ENCODE measurements at regions of chr5 and their contacts with region 1.

Region 1: DNA sequence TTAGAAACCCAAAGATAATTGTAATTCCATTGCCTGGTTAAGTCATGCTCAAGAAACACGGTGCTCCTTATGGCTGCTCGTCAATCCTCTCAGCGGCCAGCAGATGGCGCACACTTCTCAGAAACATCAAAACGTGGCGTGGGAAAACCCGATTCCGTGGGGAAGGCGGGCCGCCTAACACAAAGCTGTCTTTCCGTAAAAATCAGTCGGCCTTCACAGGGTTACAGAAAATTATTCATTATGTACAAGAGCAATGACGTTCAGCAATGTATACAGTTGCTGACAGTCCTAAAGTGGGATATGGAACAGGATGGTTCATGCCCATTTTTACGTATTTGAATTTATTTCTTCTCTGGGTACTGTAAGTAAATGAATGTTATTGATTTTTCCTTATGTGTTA is 83.5 kb downstream of the PDE4D start:
- DNase-seq: peak; percentile 48
- ATAC-seq: peak; percentile 73
- H3K4me3 Mint-ChIP-seq: peak overlapping the region; percentile 64
- H3K27ac Mint-ChIP-seq: no peak overlapping the region
- H3K4me1 Mint-ChIP-seq: peaks cover 10% of the 10 kb centered on the region
- H3K27me3 Mint-ChIP-seq: peaks cover 4% of the 10 kb centered on the region
- CTCF ChIP-seq: peak; percentile 25

Region 2: DNA sequence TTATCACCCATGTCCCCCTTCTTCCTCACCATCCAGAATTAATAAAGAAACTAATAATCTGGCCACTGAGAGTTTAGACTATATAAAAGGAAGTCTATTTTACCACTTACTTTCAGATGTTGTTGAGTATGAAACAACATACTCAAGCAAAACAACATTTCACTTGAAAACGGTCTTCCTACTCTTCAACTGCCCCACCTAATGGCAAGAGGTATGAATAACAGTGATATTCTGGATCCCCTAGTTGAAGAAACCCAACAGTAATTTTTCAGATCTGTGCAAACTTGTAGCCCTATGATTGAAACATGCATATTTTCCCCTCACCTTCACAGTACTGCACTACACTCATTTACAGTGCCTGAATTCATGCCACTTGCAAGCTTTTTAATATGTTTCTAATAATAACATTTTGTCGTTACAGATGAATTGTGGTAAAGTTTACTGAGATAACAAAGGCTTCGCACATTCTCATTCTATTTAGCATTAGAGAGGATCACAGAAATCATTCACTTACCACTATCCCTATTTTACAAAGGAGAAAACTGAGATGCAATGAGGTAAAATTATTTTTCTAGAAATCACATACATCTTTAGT is 351.4 kb after region 1 on chr5:
- CTCF ChIA-PET with region 1: no interaction called
- POLR2A ChIA-PET with region 1: no interaction called
- intact Hi-C with region 1: loop called (anchors 5 kb)
- DNase-seq: no peak
- ATAC-seq: no peak
- H3K4me3 Mint-ChIP-seq: no peak overlapping the region
- H3K27ac Mint-ChIP-seq: no peak overlapping the region
- H3K4me1 Mint-ChIP-seq: no peaks in the 10 kb centered on the region
- H3K27me3 Mint-ChIP-seq: no peaks in the 10 kb centered on the region
- CTCF ChIP-seq: no peak

Region 3: GRCh38 chr5:60382716-60383115 is 572.7 kb after region 1 on chr5:
- CTCF ChIA-PET with region 1: no interaction called
- POLR2A ChIA-PET with region 1: no interaction called
- intact Hi-C with region 1: loop called (anchors 1 kb)
- DNase-seq: no peak
- ATAC-seq: no peak
- H3K4me3 Mint-ChIP-seq: no peak overlapping the region
- H3K27ac Mint-ChIP-seq: no peak overlapping the region
- H3K4me1 Mint-ChIP-seq: peaks cover 6% of the 10 kb centered on the region
- H3K27me3 Mint-ChIP-seq: no peaks in the 10 kb centered on the region
- CTCF ChIP-seq: no peak

Region 4: GRCh38 chr5:60586307-60586901 is 776.4 kb after region 1 on chr5:
- CTCF ChIA-PET with region 1: interaction called, 22 read pairs
- POLR2A ChIA-PET with region 1: no interaction called
- intact Hi-C with region 1: loop called (anchors 1 kb)
- DNase-seq: no peak
- ATAC-seq: no peak
- H3K4me3 Mint-ChIP-seq: no peak overlapping the region
- H3K27ac Mint-ChIP-seq: no peak overlapping the region
- H3K4me1 Mint-ChIP-seq: peaks cover 18% of the 10 kb centered on the region
- H3K27me3 Mint-ChIP-seq: no peaks in the 10 kb centered on the region
- CTCF ChIP-seq: no peak

Region 5: GRCh38 chr5:60668686-60669304 is 858.8 kb after region 1 on chr5:
- CTCF ChIA-PET with region 1: interaction called, 38 read pairs
- POLR2A ChIA-PET with region 1: no interaction called
- intact Hi-C with region 1: loop called (anchors 1 kb)
- DNase-seq: no peak
- ATAC-seq: no peak
- H3K4me3 Mint-ChIP-seq: no peak overlapping the region
- H3K27ac Mint-ChIP-seq: no peak overlapping the region
- H3K4me1 Mint-ChIP-seq: no peaks in the 10 kb centered on the region
- H3K27me3 Mint-ChIP-seq: no peaks in the 10 kb centered on the region
- CTCF ChIP-seq: peak; percentile 25